CD4-positive, alpha-beta memory T cell (primary cell): ENCODE measurements at regions of chr5 and their contacts with region 1.

Region 1: GRCh38 chr5:141960449-141961202 is 2.6 kb upstream of the PCDH12 start:
- DNase-seq: peak; percentile 85 to 89 (median 88)
- H3K4me3 ChIP-seq: no peak overlapping the region
- H3K4me3 Mint-ChIP-seq: peak overlapping the region in 7 of 8 donors; percentile 33 to 66 (median 57)
- H3K27ac ChIP-seq: peak overlapping the region; percentile 22
- H3K27ac Mint-ChIP-seq: peak overlapping the region; percentile 69 to 92 (median 87)
- H3K4me1 ChIP-seq: peaks cover 45% of the 10 kb centered on the region
- H3K4me1 Mint-ChIP-seq: peaks cover 28 to 45% (median 38%) of the 10 kb centered on the region in 4 donors
- H3K27me3 ChIP-seq: no peaks in the 10 kb centered on the region
- H3K27me3 Mint-ChIP-seq: no peaks in the 10 kb centered on the region

Region 2: GRCh38 chr5:141387233-141387949 is 573.2 kb before region 1 on chr5 and contains the start of gene PCDHGB4:
- CTCF ChIA-PET with region 1: no interaction called
- POLR2A ChIA-PET with region 1: no interaction called
- intact Hi-C with region 1: no loop called
- DNase-seq: peak in 1 of 5 donors; percentile 21
- H3K4me3 ChIP-seq: no peak within 1 kb of the TSS
- H3K4me3 Mint-ChIP-seq: peak within 1 kb of the TSS in 6 of 8 donors; percentile 15 to 62 (median 40)
- H3K27ac ChIP-seq: no peak within 1 kb of the TSS
- H3K27ac Mint-ChIP-seq: peak within 1 kb of the TSS in 2 of 7 donors; percentile 37 to 38
- H3K4me1 ChIP-seq: no peaks in the 10 kb centered on the region
- H3K4me1 Mint-ChIP-seq: peaks cover 0 to 4% (median 2%) of the 10 kb centered on the region in 4 donors
- H3K27me3 ChIP-seq: peaks cover 27% of the 10 kb centered on the region
- H3K27me3 Mint-ChIP-seq: peaks cover 45 to 52% of the 10 kb centered on the region in 2 donors
- total RNA-seq, gene PCDHGB4: 0.19 to 0.23 TPM

Region 3: DNA sequence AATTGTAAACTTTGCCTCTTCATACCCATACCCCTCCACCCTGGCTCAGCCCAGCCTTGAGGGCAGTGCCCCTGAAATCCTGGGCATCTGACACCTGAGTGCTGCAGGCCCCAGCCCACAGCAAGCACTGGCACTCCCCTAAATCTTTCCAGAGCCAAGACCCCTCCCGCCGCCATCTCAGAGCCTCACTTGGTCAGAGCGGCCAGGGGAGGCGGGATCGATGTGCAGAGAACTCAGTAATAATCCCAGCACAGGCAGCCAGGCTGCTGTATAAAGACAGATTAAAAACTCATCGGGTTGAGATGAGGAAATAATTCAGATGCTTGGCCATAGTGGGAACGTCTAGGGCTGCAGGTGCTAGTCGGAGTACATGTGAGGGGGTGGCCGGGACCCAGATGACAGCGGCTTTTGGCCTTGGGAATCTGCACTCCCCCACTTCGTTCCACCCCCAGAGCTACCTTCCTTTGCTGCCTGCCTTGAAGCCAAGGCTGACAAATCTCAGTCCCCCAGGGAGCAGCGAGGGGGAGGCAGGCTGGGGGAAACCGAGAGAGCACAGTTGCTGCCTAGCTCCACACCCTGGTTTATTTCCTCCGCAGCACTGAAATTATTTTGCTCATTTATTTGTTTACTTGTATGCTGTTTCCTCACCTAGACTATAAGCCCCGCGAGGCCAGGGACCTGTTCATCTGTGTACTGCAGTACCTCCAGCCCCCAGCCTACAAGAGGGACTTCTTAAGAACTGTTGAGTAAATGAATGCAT is 259.1 kb before region 1 on chr5:
- CTCF ChIA-PET with region 1: interaction called, 250 read pairs
- POLR2A ChIA-PET with region 1: interaction called, 45 read pairs
- intact Hi-C with region 1: loop called (anchors 1 kb)
- DNase-seq: no peak
- H3K4me3 ChIP-seq: peak overlapping the region in 1 of 2 donors; percentile 57
- H3K4me3 Mint-ChIP-seq: peak overlapping the region in 5 of 8 donors; percentile 78 to 91 (median 87)
- H3K27ac ChIP-seq: no peak overlapping the region
- H3K27ac Mint-ChIP-seq: peak overlapping the region in 5 of 7 donors; percentile 62 to 90 (median 83)
- H3K4me1 ChIP-seq: peaks cover 17% of the 10 kb centered on the region
- H3K4me1 Mint-ChIP-seq: peaks cover 9 to 29% (median 14%) of the 10 kb centered on the region in 4 donors
- H3K27me3 ChIP-seq: peaks cover 7% of the 10 kb centered on the region
- H3K27me3 Mint-ChIP-seq: peaks cover 3 to 13% of the 10 kb centered on the region in 2 donors

Region 4: GRCh38 chr5:141889282-141889871 is 71.2 kb before region 1 on chr5:
- CTCF ChIA-PET with region 1: interaction called, 67 read pairs
- POLR2A ChIA-PET with region 1: interaction called, 4 read pairs
- intact Hi-C with region 1: loop called (anchors 1 kb)
- DNase-seq: no peak
- H3K4me3 ChIP-seq: no peak overlapping the region
- H3K4me3 Mint-ChIP-seq: no peak overlapping the region
- H3K27ac ChIP-seq: no peak overlapping the region
- H3K27ac Mint-ChIP-seq: no peak overlapping the region
- H3K4me1 ChIP-seq: no peaks in the 10 kb centered on the region
- H3K4me1 Mint-ChIP-seq: peaks cover 0 to 1% (median 0%) of the 10 kb centered on the region in 4 donors
- H3K27me3 ChIP-seq: peaks cover under 1% of the 10 kb centered on the region
- H3K27me3 Mint-ChIP-seq: peaks cover 26 to 34% of the 10 kb centered on the region in 2 donors

Region 5: GRCh38 chr5:141940695-141941271 is 19.8 kb before region 1 on chr5:
- CTCF ChIA-PET with region 1: interaction called, 53 read pairs
- POLR2A ChIA-PET with region 1: interaction called, 5 read pairs
- intact Hi-C with region 1: no loop called
- DNase-seq: no peak
- H3K4me3 ChIP-seq: no peak overlapping the region
- H3K4me3 Mint-ChIP-seq: no peak overlapping the region
- H3K27ac ChIP-seq: no peak overlapping the region
- H3K27ac Mint-ChIP-seq: peak overlapping the region; percentile 29 to 86 (median 68)
- H3K4me1 ChIP-seq: no peaks in the 10 kb centered on the region
- H3K4me1 Mint-ChIP-seq: peaks cover 0 to 3% (median 0%) of the 10 kb centered on the region in 4 donors
- H3K27me3 ChIP-seq: no peaks in the 10 kb centered on the region
- H3K27me3 Mint-ChIP-seq: no peaks in the 10 kb centered on the region

Region 6: GRCh38 chr5:141992349-141992963 is 31.8 kb after region 1 on chr5:
- CTCF ChIA-PET with region 1: interaction called, 18 read pairs
- POLR2A ChIA-PET with region 1: no interaction called
- intact Hi-C with region 1: no loop called
- DNase-seq: peak; percentile 67 to 74 (median 70)
- H3K4me3 ChIP-seq: no peak overlapping the region
- H3K4me3 Mint-ChIP-seq: no peak overlapping the region
- H3K27ac ChIP-seq: no peak overlapping the region
- H3K27ac Mint-ChIP-seq: peak overlapping the region in 3 of 7 donors; percentile 9 to 71 (median 60)
- H3K4me1 ChIP-seq: no peaks in the 10 kb centered on the region
- H3K4me1 Mint-ChIP-seq: peaks cover 3 to 7% (median 4%) of the 10 kb centered on the region in 4 donors
- H3K27me3 ChIP-seq: no peaks in the 10 kb centered on the region
- H3K27me3 Mint-ChIP-seq: no peaks in the 10 kb centered on the region

Region 7: GRCh38 chr5:142063878-142064331 is 103.3 kb after region 1 on chr5:
- CTCF ChIA-PET with region 1: no interaction called
- POLR2A ChIA-PET with region 1: no interaction called
- intact Hi-C with region 1: no loop called
- DNase-seq: peak in 4 of 5 donors; percentile 11 to 40 (median 34)
- H3K4me3 ChIP-seq: no peak overlapping the region
- H3K4me3 Mint-ChIP-seq: peak overlapping the region; percentile 17 to 82 (median 52)
- H3K27ac ChIP-seq: no peak overlapping the region
- H3K27ac Mint-ChIP-seq: peak overlapping the region in 6 of 7 donors; percentile 4 to 79 (median 44)
- H3K4me1 ChIP-seq: peaks cover 14% of the 10 kb centered on the region
- H3K4me1 Mint-ChIP-seq: peaks cover 8 to 14% (median 10%) of the 10 kb centered on the region in 4 donors
- H3K27me3 ChIP-seq: no peaks in the 10 kb centered on the region
- H3K27me3 Mint-ChIP-seq: no peaks in the 10 kb centered on the region

Region 8: GRCh38 chr5:142304013-142304701 is 343.5 kb after region 1 on chr5:
- CTCF ChIA-PET with region 1: no interaction called
- POLR2A ChIA-PET with region 1: no interaction called
- intact Hi-C with region 1: no loop called
- DNase-seq: no peak
- H3K4me3 ChIP-seq: no peak overlapping the region
- H3K4me3 Mint-ChIP-seq: no peak overlapping the region
- H3K27ac ChIP-seq: no peak overlapping the region
- H3K27ac Mint-ChIP-seq: no peak overlapping the region
- H3K4me1 ChIP-seq: no peaks in the 10 kb centered on the region
- H3K4me1 Mint-ChIP-seq: peaks cover 0 to 15% (median 9%) of the 10 kb centered on the region in 4 donors
- H3K27me3 ChIP-seq: no peaks in the 10 kb centered on the region
- H3K27me3 Mint-ChIP-seq: no peaks in the 10 kb centered on the region